Activated naive CD4-positive, alpha-beta T cell treated with anti-CD3 and anti-CD28 coated beads for 36 hours (primary cell): ENCODE measurements at regions of chr10 and their contacts with region 1.

Region 1: DNA sequence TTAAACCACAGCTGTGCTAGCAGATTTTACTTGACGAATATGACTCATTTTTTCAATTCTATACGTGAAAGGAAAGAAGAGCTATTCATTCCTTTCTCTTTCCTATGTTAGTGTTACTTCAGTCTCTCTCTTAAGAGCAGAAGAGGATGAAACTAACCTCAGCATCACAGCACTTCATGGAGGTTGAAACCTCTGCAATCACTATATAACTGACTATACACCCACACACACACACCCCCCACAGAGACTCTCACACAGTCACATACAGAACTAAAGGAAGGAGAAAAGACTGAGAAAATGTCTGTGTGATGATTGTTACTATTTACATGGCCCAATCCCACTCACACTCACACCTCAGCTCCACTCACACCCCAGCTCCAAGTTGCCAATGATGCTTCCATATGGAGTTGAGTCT is 104.2 kb downstream of the KIF20B start:
- DNase-seq: peak; percentile 90
- H3K4me3 Mint-ChIP-seq: no peak overlapping the region
- H3K27ac Mint-ChIP-seq: peak overlapping the region; percentile 27
- H3K4me1 Mint-ChIP-seq: peaks cover 26% of the 10 kb centered on the region
- H3K27me3 Mint-ChIP-seq: peaks cover 33% of the 10 kb centered on the region

Region 2: DNA sequence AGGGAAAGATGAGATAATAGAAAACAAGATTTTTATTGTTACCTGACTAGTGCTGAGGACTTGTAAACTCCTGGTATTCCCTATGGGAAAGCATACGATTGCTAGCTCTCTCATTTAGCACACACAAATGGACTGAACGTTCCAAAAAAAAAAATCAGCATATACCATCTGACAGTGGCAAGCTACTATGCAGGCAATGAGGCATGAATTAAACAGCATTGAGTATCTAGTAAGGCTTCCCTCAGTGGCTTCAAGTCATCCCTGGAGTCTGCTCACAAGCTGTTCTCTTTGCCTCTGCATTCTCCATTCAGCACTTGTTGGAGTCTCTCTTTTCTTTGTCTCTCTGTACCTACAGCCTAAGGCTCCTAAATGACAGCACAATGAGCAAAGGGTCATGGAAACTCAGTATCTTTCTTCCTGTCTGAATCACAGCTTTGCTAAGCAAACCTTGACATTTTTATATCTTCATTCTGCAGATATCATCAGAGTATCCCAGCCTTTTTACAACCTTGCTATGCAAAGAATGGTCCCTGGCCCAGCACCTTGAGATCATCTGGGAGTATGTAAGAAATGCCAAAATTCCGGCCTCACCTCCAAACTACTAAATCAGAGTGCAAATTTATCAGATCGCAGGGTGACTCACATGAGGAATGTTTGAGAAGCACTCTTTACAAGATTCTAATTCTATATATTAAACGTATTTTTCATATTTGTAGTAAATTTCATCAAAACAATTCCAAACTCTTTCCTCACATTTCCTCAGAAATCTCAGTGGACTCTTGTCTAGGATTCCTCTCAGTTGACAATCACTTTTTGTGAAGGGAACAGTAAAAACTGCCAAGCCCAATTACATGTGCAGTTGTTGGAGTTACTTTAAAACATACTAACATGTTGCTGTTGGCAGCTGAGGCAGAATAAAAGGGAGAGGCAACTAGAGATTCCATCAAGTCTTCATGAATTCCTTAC is 543.2 kb before region 1 on chr10:
- CTCF ChIA-PET with region 1: no interaction called
- intact Hi-C with region 1: no loop called
- DNase-seq: no peak
- H3K4me3 Mint-ChIP-seq: no peak overlapping the region
- H3K27ac Mint-ChIP-seq: no peak overlapping the region
- H3K4me1 Mint-ChIP-seq: peaks cover 5% of the 10 kb centered on the region
- H3K27me3 Mint-ChIP-seq: peaks cover 1% of the 10 kb centered on the region

Region 3: DNA sequence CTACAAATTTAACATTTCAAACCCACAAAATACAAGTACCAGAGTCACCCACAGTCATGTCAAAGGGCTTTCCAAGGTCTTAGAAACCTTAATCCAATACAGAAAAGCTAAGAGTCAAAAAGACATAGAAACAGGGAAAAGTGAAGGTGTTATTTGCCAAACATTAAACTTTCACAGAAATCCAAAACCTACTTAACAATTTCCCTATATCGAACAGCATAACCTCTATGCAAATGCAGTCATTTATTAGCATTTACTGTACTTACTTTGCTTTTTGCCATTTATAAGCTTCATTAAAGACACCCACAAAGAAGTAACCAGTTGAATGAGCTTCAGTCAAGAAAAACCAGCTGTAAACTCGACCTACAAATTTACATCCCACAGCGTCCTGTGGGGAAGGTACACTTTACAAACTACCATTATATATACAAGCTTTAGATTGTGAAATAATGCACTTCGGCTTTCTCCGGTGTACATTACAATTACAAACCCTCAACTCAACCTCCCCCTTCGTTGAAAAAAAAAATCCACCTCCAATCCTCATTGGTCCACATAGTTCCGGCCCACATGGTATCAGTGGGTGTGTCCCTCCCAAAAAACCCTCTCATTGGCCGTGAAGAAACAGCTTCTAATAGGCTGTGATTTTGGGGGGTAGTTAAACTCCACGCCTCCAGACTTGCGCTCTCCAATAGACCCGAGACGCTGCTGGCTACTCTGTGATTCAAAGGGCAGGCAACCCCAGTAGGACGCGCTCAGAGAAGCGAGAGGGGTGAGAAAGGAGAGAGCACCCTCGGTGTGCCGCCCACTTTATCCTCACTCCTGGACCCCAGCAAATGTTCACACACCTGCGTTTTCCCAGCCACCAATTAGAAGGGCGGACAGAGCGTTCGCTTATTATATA is 161.9 kb before region 1 on chr10:
- CTCF ChIA-PET with region 1: no interaction called
- intact Hi-C with region 1: loop called (anchors 1 kb)
- DNase-seq: peak; percentile 79
- H3K4me3 Mint-ChIP-seq: no peak overlapping the region
- H3K27ac Mint-ChIP-seq: no peak overlapping the region
- H3K4me1 Mint-ChIP-seq: peaks cover 8% of the 10 kb centered on the region
- H3K27me3 Mint-ChIP-seq: peaks cover 4% of the 10 kb centered on the region

Region 4: GRCh38 chr10:89701238-89702120 is 104.1 kb before region 1 on chr10 and contains the start of gene KIF20B:
- CTCF ChIA-PET with region 1: no interaction called
- intact Hi-C with region 1: loop called (anchors 1 kb)
- DNase-seq: peak; percentile 97
- H3K4me3 Mint-ChIP-seq: peak within 1 kb of the TSS; percentile 90
- H3K27ac Mint-ChIP-seq: peak within 1 kb of the TSS; percentile 97
- H3K4me1 Mint-ChIP-seq: peaks cover 34% of the 10 kb centered on the region
- H3K27me3 Mint-ChIP-seq: no peaks in the 10 kb centered on the region
- total RNA-seq, gene KIF20B: 67.2 to 70.3 TPM

Region 5: DNA sequence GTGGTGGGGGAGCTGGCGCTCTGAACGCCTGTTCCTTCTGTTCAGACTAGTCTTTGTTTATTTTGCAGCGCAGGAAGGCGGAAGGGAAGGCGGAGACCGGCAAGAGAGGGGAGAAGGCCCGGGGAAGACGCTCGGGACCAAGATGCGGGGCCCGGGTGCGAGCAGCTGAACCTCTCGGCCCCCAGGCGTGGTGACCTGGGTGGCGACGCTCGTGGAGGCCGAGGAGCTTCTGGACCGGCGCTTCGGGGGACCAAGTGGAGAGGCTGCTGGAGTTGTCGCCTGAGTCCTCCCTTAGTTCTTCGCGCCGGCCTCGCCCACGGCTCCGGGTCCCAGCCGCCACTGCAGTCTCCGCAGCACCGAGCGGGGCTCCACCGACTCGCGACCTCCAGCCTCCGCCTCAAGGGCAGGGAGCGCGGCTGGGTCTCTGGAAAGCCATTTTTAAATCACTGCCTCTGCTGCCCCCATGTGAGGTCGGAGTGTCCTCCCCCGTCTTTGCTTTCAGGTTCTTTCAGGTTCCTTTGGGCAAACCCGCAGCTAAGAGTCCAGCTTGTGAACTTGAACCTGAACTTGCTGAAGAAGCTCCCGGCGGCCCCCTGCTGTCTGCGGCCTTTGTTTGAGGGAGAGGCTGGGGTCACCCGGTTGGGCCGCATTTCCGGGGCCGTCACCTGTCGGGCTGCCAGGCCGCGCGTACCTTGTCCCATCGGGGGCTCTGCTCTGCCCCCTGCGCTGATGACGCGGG is 31.7 kb after region 1 on chr10:
- CTCF ChIA-PET with region 1: interaction called, 3 read pairs
- intact Hi-C with region 1: loop called (anchors 1 kb)
- DNase-seq: peak; percentile 29
- H3K4me3 Mint-ChIP-seq: peak overlapping the region; percentile 76
- H3K27ac Mint-ChIP-seq: no peak overlapping the region
- H3K4me1 Mint-ChIP-seq: peaks cover 8% of the 10 kb centered on the region
- H3K27me3 Mint-ChIP-seq: peaks cover 9% of the 10 kb centered on the region

Region 6: GRCh38 chr10:89954787-89955566 is 149.4 kb after region 1 on chr10:
- CTCF ChIA-PET with region 1: no interaction called
- intact Hi-C with region 1: loop called (anchors 5 kb)
- DNase-seq: no peak
- H3K4me3 Mint-ChIP-seq: no peak overlapping the region
- H3K27ac Mint-ChIP-seq: no peak overlapping the region
- H3K4me1 Mint-ChIP-seq: peaks cover 2% of the 10 kb centered on the region
- H3K27me3 Mint-ChIP-seq: peaks cover 10% of the 10 kb centered on the region

Region 7: GRCh38 chr10:90087197-90088007 is 281.8 kb after region 1 on chr10:
- CTCF ChIA-PET with region 1: no interaction called
- intact Hi-C with region 1: loop called (anchors 2 kb)
- DNase-seq: peak; percentile 35
- H3K4me3 Mint-ChIP-seq: no peak overlapping the region
- H3K27ac Mint-ChIP-seq: no peak overlapping the region
- H3K4me1 Mint-ChIP-seq: peaks cover 8% of the 10 kb centered on the region
- H3K27me3 Mint-ChIP-seq: peaks cover 7% of the 10 kb centered on the region

Region 8: GRCh38 chr10:90227217-90227656 is 421.6 kb after region 1 on chr10:
- CTCF ChIA-PET with region 1: no interaction called
- intact Hi-C with region 1: loop called (anchors 1 kb)
- DNase-seq: peak; percentile 82
- H3K4me3 Mint-ChIP-seq: no peak overlapping the region
- H3K27ac Mint-ChIP-seq: no peak overlapping the region
- H3K4me1 Mint-ChIP-seq: peaks cover 13% of the 10 kb centered on the region
- H3K27me3 Mint-ChIP-seq: peaks cover 26% of the 10 kb centered on the region